CD8-positive, alpha-beta T cell (primary cell): ENCODE measurements at regions of chr1 and their contacts with region 1.

Region 1: DNA sequence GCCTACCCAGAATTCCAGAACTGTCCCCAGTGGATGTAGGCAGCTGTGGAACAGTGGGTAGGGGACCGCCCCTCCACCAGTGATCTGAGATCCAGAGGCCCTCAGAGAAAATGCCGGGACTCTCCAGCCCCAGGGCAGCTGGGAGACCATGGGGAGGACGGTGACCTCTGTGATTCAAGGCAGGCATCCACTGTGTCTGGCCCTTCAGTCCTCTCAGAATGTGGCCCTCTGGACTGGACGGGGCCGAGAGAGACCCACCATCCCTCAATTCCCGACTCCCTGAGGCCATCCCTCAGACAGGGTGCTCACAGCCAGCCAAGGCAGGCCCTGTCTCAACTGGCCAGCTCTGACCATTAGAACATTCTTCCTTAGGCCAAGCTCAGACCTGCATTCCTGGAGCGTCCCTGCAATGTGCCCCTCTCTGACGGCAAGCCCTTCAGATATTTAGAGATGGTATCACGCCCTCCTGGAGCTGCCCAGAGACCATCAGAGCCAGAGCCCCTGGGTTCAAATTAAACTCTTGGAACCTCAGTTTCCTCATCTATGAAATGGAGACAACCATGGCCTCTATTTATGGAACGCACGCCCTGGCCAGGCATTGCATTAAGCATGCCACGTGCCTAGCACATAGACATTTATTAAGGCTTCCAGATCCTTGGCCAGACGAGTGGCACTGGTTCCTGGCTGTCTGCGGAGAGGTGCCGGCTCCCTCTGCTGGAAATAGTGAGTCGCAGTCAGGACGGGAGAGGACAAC is 9.6 kb upstream of the EPS8L3 start:
- DNase-seq: peak; percentile 29 to 83 (median 67)
- ATAC-seq: peak; percentile 90
- H3K4me3 ChIP-seq: no peak overlapping the region
- H3K4me3 Mint-ChIP-seq: no peak overlapping the region
- H3K27ac ChIP-seq: no peak overlapping the region
- H3K27ac Mint-ChIP-seq: no peak overlapping the region
- H3K4me1 ChIP-seq: peaks cover 3% of the 10 kb centered on the region
- H3K4me1 Mint-ChIP-seq: peaks cover 8% of the 10 kb centered on the region
- H3K27me3 ChIP-seq: peaks cover 0 to 2% of the 10 kb centered on the region in 2 experiments
- H3K27me3 Mint-ChIP-seq: peaks cover 3% of the 10 kb centered on the region
- CTCF ChIP-seq: peak; percentile 65

Region 2: GRCh38 chr1:108897865-108898720 is 875.2 kb before region 1 on chr1:
- CTCF ChIA-PET with region 1: no interaction called
- POLR2A ChIA-PET with region 1: no interaction called
- intact Hi-C with region 1: no loop called
- DNase-seq: peak in 5 of 9 experiments; percentile 9 to 74 (median 35)
- ATAC-seq: peak; percentile 78
- H3K4me3 ChIP-seq: no peak overlapping the region
- H3K4me3 Mint-ChIP-seq: no peak overlapping the region
- H3K27ac ChIP-seq: no peak overlapping the region
- H3K27ac Mint-ChIP-seq: no peak overlapping the region
- H3K4me1 ChIP-seq: no peaks in the 10 kb centered on the region
- H3K4me1 Mint-ChIP-seq: no peaks in the 10 kb centered on the region
- H3K27me3 ChIP-seq: no peaks in the 10 kb centered on the region
- H3K27me3 Mint-ChIP-seq: peaks cover 2% of the 10 kb centered on the region
- CTCF ChIP-seq: peak; percentile 68

Region 3: DNA sequence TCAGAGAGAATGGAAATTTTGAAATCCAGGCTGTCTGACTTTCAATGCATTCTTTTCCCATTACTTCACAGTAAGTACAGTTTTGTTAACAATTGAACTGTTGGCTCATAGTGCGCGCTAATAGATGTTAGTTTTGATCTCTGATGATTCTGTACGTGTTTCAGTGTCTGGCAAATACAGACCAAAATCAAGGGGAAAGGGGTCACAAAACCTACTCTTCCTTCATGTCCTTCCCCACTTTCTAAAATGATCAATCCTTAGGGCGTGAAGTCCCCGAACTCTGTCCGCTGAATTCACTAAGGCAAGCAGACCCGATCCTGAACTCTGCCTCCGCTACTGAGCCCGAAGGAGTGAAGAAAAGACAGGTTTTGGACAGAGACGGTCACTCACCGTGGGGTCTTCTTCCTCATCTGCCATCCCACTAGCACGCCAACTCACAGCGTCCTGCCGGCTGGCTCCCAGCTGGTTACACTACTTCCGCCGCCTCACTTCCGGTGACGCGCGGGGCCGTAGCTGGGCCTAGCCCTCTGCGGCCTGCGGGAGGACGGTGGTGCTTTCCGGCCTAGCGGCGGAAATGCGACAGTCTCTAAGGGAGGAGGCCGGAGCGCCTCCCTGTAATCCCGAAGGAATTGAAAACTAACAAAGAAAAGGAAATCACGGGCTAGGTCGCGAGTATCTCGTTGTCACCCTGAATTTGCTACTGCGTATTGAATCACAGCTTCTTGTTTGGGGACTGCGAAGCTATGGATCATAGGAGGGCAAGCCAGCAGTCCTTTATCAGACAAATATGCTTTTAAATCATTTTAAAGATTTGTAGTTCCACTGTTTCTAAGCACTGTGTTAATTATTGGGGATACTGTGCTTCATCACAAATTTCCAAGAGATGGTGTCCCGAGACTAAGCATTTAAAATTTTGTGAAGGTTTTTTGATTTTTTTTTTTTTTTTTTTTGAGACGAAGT is 697.5 kb before region 1 on chr1 and contains the start of gene TAF13:
- CTCF ChIA-PET with region 1: no interaction called
- POLR2A ChIA-PET with region 1: no interaction called
- intact Hi-C with region 1: no loop called
- DNase-seq: peak; percentile 63 to 94 (median 86)
- ATAC-seq: peak; percentile 95
- H3K4me3 ChIP-seq: peak within 1 kb of the TSS; percentile 66 to 72
- H3K4me3 Mint-ChIP-seq: peak within 1 kb of the TSS; percentile 98
- H3K27ac ChIP-seq: peak within 1 kb of the TSS; percentile 93 to 97
- H3K27ac Mint-ChIP-seq: peak within 1 kb of the TSS; percentile 99
- H3K4me1 ChIP-seq: peaks cover 16% of the 10 kb centered on the region
- H3K4me1 Mint-ChIP-seq: peaks cover 23% of the 10 kb centered on the region
- H3K27me3 ChIP-seq: no peaks in the 10 kb centered on the region
- H3K27me3 Mint-ChIP-seq: no peaks in the 10 kb centered on the region
- CTCF ChIP-seq: no peak
- total RNA-seq, gene TAF13: 36.2 to 40.4 TPM

Region 4: GRCh38 chr1:109655601-109656519 is 117.5 kb before region 1 on chr1 and contains the start of gene GSTM4:
- CTCF ChIA-PET with region 1: interaction called, 50 read pairs
- POLR2A ChIA-PET with region 1: no interaction called
- intact Hi-C with region 1: no loop called
- DNase-seq: peak in 8 of 9 experiments; percentile 42 to 83 (median 66)
- ATAC-seq: peak; percentile 86
- H3K4me3 ChIP-seq: peak within 1 kb of the TSS; percentile 66 to 99
- H3K4me3 Mint-ChIP-seq: peak within 1 kb of the TSS; percentile 94
- H3K27ac ChIP-seq: peak within 1 kb of the TSS; percentile 55 to 77
- H3K27ac Mint-ChIP-seq: peak within 1 kb of the TSS; percentile 90
- H3K4me1 ChIP-seq: peaks cover 7% of the 10 kb centered on the region
- H3K4me1 Mint-ChIP-seq: peaks cover 22% of the 10 kb centered on the region
- H3K27me3 ChIP-seq: no peaks in the 10 kb centered on the region
- H3K27me3 Mint-ChIP-seq: no peaks in the 10 kb centered on the region
- CTCF ChIP-seq: no peak
- total RNA-seq, gene GSTM4: 9.5 to 10.5 TPM

Region 5: GRCh38 chr1:109704173-109704572 is 69.2 kb before region 1 on chr1:
- CTCF ChIA-PET with region 1: no interaction called
- POLR2A ChIA-PET with region 1: no interaction called
- intact Hi-C with region 1: no loop called
- DNase-seq: no peak
- ATAC-seq: no peak
- H3K4me3 ChIP-seq: no peak overlapping the region
- H3K4me3 Mint-ChIP-seq: no peak overlapping the region
- H3K27ac ChIP-seq: no peak overlapping the region
- H3K27ac Mint-ChIP-seq: no peak overlapping the region
- H3K4me1 ChIP-seq: no peaks in the 10 kb centered on the region
- H3K4me1 Mint-ChIP-seq: no peaks in the 10 kb centered on the region
- H3K27me3 ChIP-seq: no peaks in the 10 kb centered on the region
- H3K27me3 Mint-ChIP-seq: no peaks in the 10 kb centered on the region
- CTCF ChIP-seq: no peak

Region 6: GRCh38 chr1:109796484-109797302 is 23.4 kb after region 1 on chr1:
- CTCF ChIA-PET with region 1: interaction called, 205 read pairs
- POLR2A ChIA-PET with region 1: interaction called, 3 read pairs
- intact Hi-C with region 1: no loop called
- DNase-seq: no peak
- ATAC-seq: no peak
- H3K4me3 ChIP-seq: no peak overlapping the region
- H3K4me3 Mint-ChIP-seq: no peak overlapping the region
- H3K27ac ChIP-seq: no peak overlapping the region
- H3K27ac Mint-ChIP-seq: no peak overlapping the region
- H3K4me1 ChIP-seq: peaks cover 66% of the 10 kb centered on the region
- H3K4me1 Mint-ChIP-seq: peaks cover 70% of the 10 kb centered on the region
- H3K27me3 ChIP-seq: no peaks in the 10 kb centered on the region
- H3K27me3 Mint-ChIP-seq: no peaks in the 10 kb centered on the region
- CTCF ChIP-seq: no peak

Region 7: GRCh38 chr1:109807822-109808680 is 34.7 kb after region 1 on chr1:
- CTCF ChIA-PET with region 1: interaction called, 35 read pairs
- POLR2A ChIA-PET with region 1: no interaction called
- intact Hi-C with region 1: no loop called
- DNase-seq: no peak
- ATAC-seq: no peak
- H3K4me3 ChIP-seq: no peak overlapping the region
- H3K4me3 Mint-ChIP-seq: no peak overlapping the region
- H3K27ac ChIP-seq: no peak overlapping the region
- H3K27ac Mint-ChIP-seq: no peak overlapping the region
- H3K4me1 ChIP-seq: peaks cover 22% of the 10 kb centered on the region
- H3K4me1 Mint-ChIP-seq: peaks cover 26% of the 10 kb centered on the region
- H3K27me3 ChIP-seq: no peaks in the 10 kb centered on the region
- H3K27me3 Mint-ChIP-seq: no peaks in the 10 kb centered on the region
- CTCF ChIP-seq: no peak

Region 8: DNA sequence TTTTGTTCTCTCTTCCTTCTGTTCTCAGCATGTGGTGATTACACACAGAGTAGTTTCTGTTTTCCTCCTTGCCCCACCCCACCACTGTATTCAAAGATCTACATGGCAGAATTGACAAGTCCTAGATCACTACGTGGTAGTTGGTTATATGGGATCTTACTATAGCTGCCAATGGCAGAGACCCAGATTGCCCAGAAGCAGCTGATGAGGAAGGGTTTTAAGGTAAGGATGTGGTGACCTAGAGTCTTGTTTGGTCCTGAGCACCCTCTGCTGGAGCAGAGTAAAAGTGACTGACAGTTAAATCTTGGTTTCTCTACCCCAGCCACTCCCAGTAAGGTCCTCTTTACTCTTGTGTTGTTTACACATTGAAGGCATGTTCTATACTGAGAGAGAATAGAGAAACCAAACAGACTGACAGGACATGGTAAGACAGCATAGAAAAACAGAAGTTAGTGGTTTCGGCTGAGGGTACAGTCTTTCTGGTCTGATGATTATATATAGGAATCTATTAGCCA is 238.3 kb after region 1 on chr1:
- CTCF ChIA-PET with region 1: interaction called, 25 read pairs
- POLR2A ChIA-PET with region 1: no interaction called
- intact Hi-C with region 1: loop called in 1 of 2 experiments (anchors 1 kb)
- DNase-seq: peak in 5 of 9 experiments; percentile 12 to 62 (median 30)
- ATAC-seq: peak; percentile 95
- H3K4me3 ChIP-seq: no peak overlapping the region
- H3K4me3 Mint-ChIP-seq: no peak overlapping the region
- H3K27ac ChIP-seq: no peak overlapping the region
- H3K27ac Mint-ChIP-seq: no peak overlapping the region
- H3K4me1 ChIP-seq: no peaks in the 10 kb centered on the region
- H3K4me1 Mint-ChIP-seq: peaks cover 2% of the 10 kb centered on the region
- H3K27me3 ChIP-seq: no peaks in the 10 kb centered on the region
- H3K27me3 Mint-ChIP-seq: no peaks in the 10 kb centered on the region
- CTCF ChIP-seq: peak; percentile 46